ENCODE measurements at regions of chr4 and their contacts with region 1.

Region 1: DNA sequence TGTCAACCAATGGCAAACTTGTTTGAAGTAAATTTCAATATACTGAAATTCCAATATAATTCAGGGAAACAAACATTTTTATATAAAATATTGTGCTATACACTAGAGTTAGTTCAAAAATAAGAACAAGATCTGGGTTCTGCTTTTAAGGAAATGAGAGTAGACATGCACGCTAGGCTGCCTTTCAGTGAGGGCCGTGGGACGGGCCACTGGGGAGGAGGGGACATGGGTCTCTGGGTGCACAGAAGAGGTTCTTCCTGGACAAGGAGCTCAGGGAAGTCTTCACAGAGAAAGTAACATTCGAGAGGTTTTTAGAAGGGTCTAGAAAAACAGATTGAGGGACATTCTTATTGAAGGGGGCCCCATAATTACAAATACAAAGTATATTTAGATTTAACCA is 64.4 kb downstream of the SHROOM3 start:
- DNase-seq: no peak
- H3K4me3 ChIP-seq: no peak overlapping the region
- H3K27ac ChIP-seq: no peak overlapping the region
- H3K4me1 ChIP-seq: no peaks in the 10 kb centered on the region
- H3K27me3 ChIP-seq: no peaks in the 10 kb centered on the region
- CTCF ChIP-seq: no peak
- EP300 ChIP-seq: no peak
- POLR2A ChIP-seq: no peak

Region 2: GRCh38 chr4:76002176-76002575 is 497.3 kb before region 1 on chr4:
- intact Hi-C with region 1: loop called in 2 of 4 experiments (anchors 10 kb)
- DNase-seq: no peak
- H3K4me3 ChIP-seq: no peak overlapping the region
- H3K27ac ChIP-seq: no peak overlapping the region
- H3K4me1 ChIP-seq: no peaks in the 10 kb centered on the region
- H3K27me3 ChIP-seq: no peaks in the 10 kb centered on the region
- CTCF ChIP-seq: no peak
- EP300 ChIP-seq: no peak
- POLR2A ChIP-seq: no peak

Region 3: DNA sequence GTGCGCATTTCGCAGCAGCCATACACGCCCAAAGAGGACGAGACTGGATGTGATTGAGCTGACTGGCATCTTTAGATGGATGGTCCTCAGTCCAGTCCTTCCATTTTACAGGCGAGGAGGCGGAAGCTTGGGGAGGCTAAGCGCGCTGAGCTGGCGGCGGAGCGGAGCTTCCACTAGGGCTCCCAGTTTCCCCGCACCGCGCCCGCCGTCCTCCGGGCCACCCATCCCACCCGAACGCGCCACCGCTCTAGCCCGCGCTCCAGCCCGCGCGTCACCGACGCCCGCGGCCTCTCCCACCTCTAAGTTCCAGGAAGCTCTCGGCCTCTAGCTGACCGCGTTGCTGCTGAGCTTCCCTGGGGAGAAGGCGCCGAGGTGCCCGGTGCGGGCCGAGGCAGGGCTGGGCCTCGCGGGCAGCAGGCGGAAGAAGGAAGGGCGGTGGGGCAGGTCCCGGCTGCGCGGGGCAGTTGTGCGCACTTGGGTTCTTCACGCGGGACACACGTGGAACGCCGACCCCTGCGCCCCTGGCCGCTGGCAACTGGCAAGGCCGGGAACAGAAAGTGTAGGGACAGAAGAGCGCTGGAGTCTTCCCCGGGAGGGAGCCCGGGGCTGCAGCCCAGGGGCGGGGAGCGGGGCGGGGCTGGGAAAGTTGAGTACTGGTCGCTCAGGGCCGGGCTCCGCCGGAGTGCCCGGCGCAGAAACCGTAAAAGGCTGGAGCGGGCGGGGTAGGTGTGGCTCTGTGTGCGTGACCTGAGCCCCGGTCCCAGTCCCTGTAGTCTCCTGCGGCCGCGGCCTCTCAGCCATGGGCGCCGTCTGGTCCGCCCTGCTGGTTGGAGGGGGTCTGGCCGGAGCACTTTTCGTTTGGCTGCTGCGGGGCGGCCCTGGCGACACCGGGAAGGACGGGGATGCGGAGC is 193.2 kb before region 1 on chr4 and contains the start of gene STBD1:
- intact Hi-C with region 1: no loop called
- DNase-seq: peak; percentile 60 to 80 (median 74)
- H3K4me3 ChIP-seq: peak within 1 kb of the TSS; percentile 58
- H3K27ac ChIP-seq: peak within 1 kb of the TSS; percentile 57 to 84
- H3K4me1 ChIP-seq: peaks cover 8% of the 10 kb centered on the region
- H3K27me3 ChIP-seq: no peaks in the 10 kb centered on the region
- CTCF ChIP-seq: no peak
- EP300 ChIP-seq: no peak
- POLR2A ChIP-seq: no peak
- total RNA-seq, gene STBD1: 2.1 to 7.0 (median 4.6) TPM

Region 4: GRCh38 chr4:76470064-76470463 is 29.4 kb before region 1 on chr4:
- intact Hi-C with region 1: no loop called
- DNase-seq: no peak
- H3K4me3 ChIP-seq: no peak overlapping the region
- H3K27ac ChIP-seq: no peak overlapping the region
- H3K4me1 ChIP-seq: no peaks in the 10 kb centered on the region
- H3K27me3 ChIP-seq: no peaks in the 10 kb centered on the region
- CTCF ChIP-seq: no peak
- EP300 ChIP-seq: no peak
- POLR2A ChIP-seq: no peak

Region 5: DNA sequence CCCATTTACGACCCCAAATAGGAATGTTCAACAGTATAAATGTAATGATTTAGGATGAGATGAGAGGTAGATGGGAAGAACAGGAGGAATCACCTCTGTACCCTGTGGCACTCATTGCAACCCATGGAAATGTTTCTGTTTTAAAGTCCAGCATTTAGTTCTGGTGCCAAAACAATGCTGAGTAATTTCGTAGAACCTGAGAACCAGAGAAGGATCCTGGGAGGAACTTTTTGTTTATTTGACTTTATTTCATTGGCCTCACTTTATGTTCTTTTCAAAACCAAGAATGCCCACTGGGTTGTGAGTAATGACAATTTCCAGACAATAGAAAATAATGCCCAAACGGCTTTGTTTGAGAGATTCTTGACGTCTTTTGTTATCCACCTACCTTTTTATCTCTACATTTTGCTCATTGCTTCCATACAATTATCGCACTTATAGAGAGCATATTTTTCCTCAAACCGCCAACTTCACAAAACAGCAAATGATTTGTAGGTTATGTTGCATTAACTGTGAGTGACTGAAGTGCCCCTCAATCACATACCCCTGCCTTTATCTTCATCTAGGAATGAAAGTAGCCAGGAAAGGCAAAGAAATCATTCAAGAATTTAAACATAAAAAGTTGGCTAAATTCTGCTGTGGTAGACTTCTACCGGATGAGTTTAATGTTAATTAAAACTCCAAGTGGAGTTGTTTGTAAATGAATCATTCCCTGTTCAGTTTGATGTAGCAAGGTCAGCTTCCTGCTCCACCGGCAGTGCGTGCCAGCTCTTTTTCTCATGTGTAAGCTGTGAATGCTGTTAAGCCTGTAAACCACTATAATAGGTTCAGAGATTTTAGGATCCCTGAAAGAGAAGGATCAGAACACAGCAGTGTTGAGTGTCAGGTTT is 47.1 kb after region 1 on chr4:
- intact Hi-C with region 1: no loop called
- DNase-seq: peak in 1 of 5 donors; percentile 24
- H3K4me3 ChIP-seq: no peak overlapping the region
- H3K27ac ChIP-seq: no peak overlapping the region
- H3K4me1 ChIP-seq: no peaks in the 10 kb centered on the region
- H3K27me3 ChIP-seq: no peaks in the 10 kb centered on the region
- CTCF ChIP-seq: no peak
- EP300 ChIP-seq: no peak
- POLR2A ChIP-seq: no peak